ENCODE measurements at regions of chr3 and their contacts with region 1.

Region 1: GRCh38 chr3:52056968-52057805 is 816 bp upstream of the DUSP7 start:
- DNase-seq: peak; percentile 99 to 100 (median 99)
- ATAC-seq: peak; percentile 84
- H3K4me3 ChIP-seq: peak overlapping the region; percentile 68 to 77
- H3K4me3 Mint-ChIP-seq: peak overlapping the region; percentile 91
- H3K27ac ChIP-seq: peak overlapping the region; percentile 52 to 87
- H3K27ac Mint-ChIP-seq: peak overlapping the region; percentile 90
- H3K4me1 ChIP-seq: peaks cover 36% of the 10 kb centered on the region
- H3K4me1 Mint-ChIP-seq: peaks cover 35% of the 10 kb centered on the region
- H3K27me3 ChIP-seq: no peaks in the 10 kb centered on the region
- H3K27me3 Mint-ChIP-seq: no peaks in the 10 kb centered on the region
- CTCF ChIP-seq: no peak

Region 2: GRCh38 chr3:51391075-51391567 is 666.1 kb before region 1 on chr3 and contains the start of gene RBM15B:
- CTCF ChIA-PET with region 1: no interaction called
- POLR2A ChIA-PET with region 1: no interaction called
- intact Hi-C with region 1: loop called in 1 of 2 experiments (anchors 10 kb)
- DNase-seq: peak; percentile 94 to 98 (median 97)
- ATAC-seq: peak; percentile 89
- H3K4me3 ChIP-seq: peak within 1 kb of the TSS; percentile 55 to 61
- H3K4me3 Mint-ChIP-seq: peak within 1 kb of the TSS; percentile 82
- H3K27ac ChIP-seq: peak within 1 kb of the TSS; percentile 71 to 88
- H3K27ac Mint-ChIP-seq: peak within 1 kb of the TSS; percentile 94
- H3K4me1 ChIP-seq: peaks cover 50% of the 10 kb centered on the region
- H3K4me1 Mint-ChIP-seq: peaks cover 68% of the 10 kb centered on the region
- H3K27me3 ChIP-seq: no peaks in the 10 kb centered on the region
- H3K27me3 Mint-ChIP-seq: no peaks in the 10 kb centered on the region
- CTCF ChIP-seq: peak; percentile 70
- total RNA-seq, gene RBM15B: 29.5 to 29.8 TPM

Region 3: DNA sequence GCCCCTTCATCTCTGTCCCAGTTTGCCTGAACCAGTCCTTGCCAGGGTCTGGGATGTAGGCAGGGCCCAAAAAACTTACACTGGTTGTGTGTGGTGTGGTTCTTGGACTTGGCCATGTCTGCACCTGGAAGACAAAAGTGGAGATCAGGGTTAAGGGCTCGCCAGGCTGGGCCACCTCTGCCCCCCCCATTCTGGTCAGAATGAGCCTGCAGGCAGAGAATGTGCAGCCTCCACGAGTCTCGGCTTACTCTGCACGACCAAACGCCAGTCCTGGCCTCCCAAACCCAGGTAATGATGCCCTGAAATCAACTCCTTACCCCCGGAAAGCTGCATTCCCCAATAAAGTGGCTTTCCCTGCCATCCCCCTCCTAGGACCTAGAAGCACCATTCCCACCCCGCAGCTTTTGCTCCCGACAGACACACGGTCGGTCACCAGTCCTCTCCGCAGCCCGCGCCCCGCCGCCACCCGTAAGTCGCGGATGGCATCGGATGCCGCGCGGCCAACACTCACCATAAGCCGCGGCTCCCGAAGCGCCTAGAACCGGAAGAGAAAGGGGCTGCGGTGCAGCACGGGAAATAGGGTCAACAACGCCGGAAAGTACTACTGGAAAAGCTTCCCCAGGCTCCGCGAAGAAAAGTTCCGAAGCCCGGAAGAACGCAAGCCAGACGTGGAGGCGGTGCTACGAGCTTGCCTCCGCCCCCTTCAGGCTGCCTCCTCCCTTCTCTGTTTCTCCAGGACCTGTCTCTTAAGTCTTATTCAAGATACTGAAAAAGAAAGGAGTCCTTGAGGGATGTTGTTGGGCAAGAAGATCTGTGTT is 61.6 kb before region 1 on chr3 and contains the start of gene RPL29:
- CTCF ChIA-PET with region 1: interaction called, 97 read pairs
- POLR2A ChIA-PET with region 1: interaction called, 7 read pairs
- intact Hi-C with region 1: loop called (anchors 1 kb)
- DNase-seq: peak; percentile 85 to 97 (median 91)
- ATAC-seq: peak; percentile 98
- H3K4me3 ChIP-seq: peak within 1 kb of the TSS; percentile 82 to 93
- H3K4me3 Mint-ChIP-seq: peak within 1 kb of the TSS; percentile 100
- H3K27ac ChIP-seq: peak within 1 kb of the TSS; percentile 86 to 92
- H3K27ac Mint-ChIP-seq: peak within 1 kb of the TSS; percentile 100
- H3K4me1 ChIP-seq: peaks cover 14% of the 10 kb centered on the region
- H3K4me1 Mint-ChIP-seq: peaks cover 35% of the 10 kb centered on the region
- H3K27me3 ChIP-seq: no peaks in the 10 kb centered on the region
- H3K27me3 Mint-ChIP-seq: no peaks in the 10 kb centered on the region
- CTCF ChIP-seq: no peak
- total RNA-seq, gene RPL29: 1,694 to 1,736 TPM

Region 4: DNA sequence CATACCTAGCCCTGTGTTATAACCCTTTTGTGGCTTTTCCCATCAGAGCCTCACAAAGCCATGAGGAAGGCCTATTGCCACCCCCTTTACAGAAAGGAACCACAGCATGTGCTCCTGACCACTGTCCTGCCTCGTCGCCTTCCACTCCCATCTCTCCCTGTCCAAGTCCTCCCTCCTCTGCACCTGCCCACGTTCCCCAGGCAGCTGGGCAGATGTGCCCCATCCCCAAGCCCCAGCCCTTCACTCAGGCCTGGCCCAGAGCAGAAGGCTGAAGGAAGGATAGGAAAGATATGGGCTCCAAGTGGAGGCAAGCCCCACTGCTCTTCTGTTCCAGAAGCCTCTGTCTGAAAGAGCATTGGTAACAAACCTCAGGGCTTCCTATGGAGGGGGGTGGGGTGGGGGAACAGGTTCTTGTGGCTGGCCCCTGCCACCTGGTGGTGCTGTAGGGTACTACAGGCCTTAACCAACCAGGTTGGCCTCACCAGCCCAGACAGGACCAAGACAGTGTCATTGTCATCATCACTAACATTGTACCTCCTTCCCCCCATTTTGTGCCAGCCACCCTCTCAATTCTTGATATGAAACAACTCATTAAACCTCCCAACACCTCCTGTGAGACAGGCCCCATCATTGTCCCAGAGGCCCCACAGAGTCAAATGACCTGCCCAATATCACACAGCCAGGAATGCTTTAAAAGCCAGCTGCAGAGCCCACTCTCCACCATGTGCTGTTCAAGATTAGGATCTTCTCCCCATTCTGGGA is 87.0 kb after region 1 on chr3:
- CTCF ChIA-PET with region 1: interaction called, 10 read pairs
- POLR2A ChIA-PET with region 1: interaction called, 3 read pairs
- intact Hi-C with region 1: loop called in 1 of 2 experiments (anchors 1 kb)
- DNase-seq: peak; percentile 74 to 92 (median 90)
- ATAC-seq: peak; percentile 100
- H3K4me3 ChIP-seq: no peak overlapping the region
- H3K4me3 Mint-ChIP-seq: no peak overlapping the region
- H3K27ac ChIP-seq: no peak overlapping the region
- H3K27ac Mint-ChIP-seq: peak overlapping the region; percentile 27
- H3K4me1 ChIP-seq: peaks cover 7% of the 10 kb centered on the region
- H3K4me1 Mint-ChIP-seq: peaks cover 7% of the 10 kb centered on the region
- H3K27me3 ChIP-seq: no peaks in the 10 kb centered on the region
- H3K27me3 Mint-ChIP-seq: no peaks in the 10 kb centered on the region
- CTCF ChIP-seq: peak; percentile 92

Region 5: DNA sequence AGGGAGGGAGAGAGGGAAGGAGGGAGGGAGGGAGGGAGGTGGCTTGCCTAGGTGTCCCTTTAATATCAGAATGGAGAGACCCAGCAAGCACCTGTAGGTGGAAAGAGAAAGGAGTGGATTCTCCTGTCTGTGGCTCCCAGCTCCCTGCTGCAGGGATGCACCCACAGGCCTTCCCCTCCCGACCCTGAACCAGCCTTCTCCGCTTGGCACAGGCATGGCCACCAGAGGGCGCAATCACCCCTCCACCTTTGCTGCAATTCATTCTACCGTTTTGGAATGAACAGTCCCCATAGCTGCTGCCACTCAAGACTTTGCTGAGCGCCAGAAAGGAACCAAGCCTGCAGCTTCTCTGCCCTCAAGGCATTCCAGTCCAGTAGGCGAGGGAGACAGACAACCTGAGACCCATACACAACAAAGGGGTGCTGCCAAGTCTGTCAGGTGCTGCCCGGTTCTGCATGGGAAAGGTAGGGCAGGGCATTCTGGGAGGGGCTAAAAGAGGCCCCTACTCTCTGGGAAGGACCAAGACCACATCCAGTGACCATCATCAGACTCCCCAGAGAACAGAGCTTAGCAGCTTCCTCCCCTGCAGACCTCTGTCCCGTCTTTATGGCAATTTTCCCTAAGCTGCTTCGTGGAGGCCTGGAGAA is 163.3 kb after region 1 on chr3:
- CTCF ChIA-PET with region 1: interaction called, 4 read pairs
- POLR2A ChIA-PET with region 1: no interaction called
- intact Hi-C with region 1: loop called in 1 of 2 experiments (anchors 10 kb)
- DNase-seq: peak; percentile 75 to 96 (median 86)
- ATAC-seq: peak; percentile 58
- H3K4me3 ChIP-seq: no peak overlapping the region
- H3K4me3 Mint-ChIP-seq: peak overlapping the region; percentile 65
- H3K27ac ChIP-seq: no peak overlapping the region
- H3K27ac Mint-ChIP-seq: peak overlapping the region; percentile 70
- H3K4me1 ChIP-seq: peaks cover 92% of the 10 kb centered on the region
- H3K4me1 Mint-ChIP-seq: peaks cover 85% of the 10 kb centered on the region
- H3K27me3 ChIP-seq: no peaks in the 10 kb centered on the region
- H3K27me3 Mint-ChIP-seq: no peaks in the 10 kb centered on the region
- CTCF ChIP-seq: peak; percentile 70

Region 6: GRCh38 chr3:52455283-52456168 is 398.3 kb after region 1 on chr3 and contains the start of gene NISCH:
- CTCF ChIA-PET with region 1: no interaction called
- POLR2A ChIA-PET with region 1: no interaction called
- intact Hi-C with region 1: loop called (anchors 1 to 5 kb)
- DNase-seq: peak; percentile 92 to 99 (median 96)
- ATAC-seq: peak; percentile 94
- H3K4me3 ChIP-seq: peak within 1 kb of the TSS; percentile 86 to 97
- H3K4me3 Mint-ChIP-seq: peak within 1 kb of the TSS; percentile 91
- H3K27ac ChIP-seq: peak within 1 kb of the TSS; percentile 90 to 97
- H3K27ac Mint-ChIP-seq: peak within 1 kb of the TSS; percentile 99
- H3K4me1 ChIP-seq: peaks cover 26% of the 10 kb centered on the region
- H3K4me1 Mint-ChIP-seq: peaks cover 43% of the 10 kb centered on the region
- H3K27me3 ChIP-seq: no peaks in the 10 kb centered on the region
- H3K27me3 Mint-ChIP-seq: no peaks in the 10 kb centered on the region
- CTCF ChIP-seq: no peak
- total RNA-seq, gene NISCH: 150 to 163 TPM

Measured in CD8-positive, alpha-beta T cell (primary cell).